Activated B cell treated with CpG ODN at 0.5 μM for 24 hours (primary cell): ENCODE measurements at regions of chr11 and their contacts with region 1.

Region 1: DNA sequence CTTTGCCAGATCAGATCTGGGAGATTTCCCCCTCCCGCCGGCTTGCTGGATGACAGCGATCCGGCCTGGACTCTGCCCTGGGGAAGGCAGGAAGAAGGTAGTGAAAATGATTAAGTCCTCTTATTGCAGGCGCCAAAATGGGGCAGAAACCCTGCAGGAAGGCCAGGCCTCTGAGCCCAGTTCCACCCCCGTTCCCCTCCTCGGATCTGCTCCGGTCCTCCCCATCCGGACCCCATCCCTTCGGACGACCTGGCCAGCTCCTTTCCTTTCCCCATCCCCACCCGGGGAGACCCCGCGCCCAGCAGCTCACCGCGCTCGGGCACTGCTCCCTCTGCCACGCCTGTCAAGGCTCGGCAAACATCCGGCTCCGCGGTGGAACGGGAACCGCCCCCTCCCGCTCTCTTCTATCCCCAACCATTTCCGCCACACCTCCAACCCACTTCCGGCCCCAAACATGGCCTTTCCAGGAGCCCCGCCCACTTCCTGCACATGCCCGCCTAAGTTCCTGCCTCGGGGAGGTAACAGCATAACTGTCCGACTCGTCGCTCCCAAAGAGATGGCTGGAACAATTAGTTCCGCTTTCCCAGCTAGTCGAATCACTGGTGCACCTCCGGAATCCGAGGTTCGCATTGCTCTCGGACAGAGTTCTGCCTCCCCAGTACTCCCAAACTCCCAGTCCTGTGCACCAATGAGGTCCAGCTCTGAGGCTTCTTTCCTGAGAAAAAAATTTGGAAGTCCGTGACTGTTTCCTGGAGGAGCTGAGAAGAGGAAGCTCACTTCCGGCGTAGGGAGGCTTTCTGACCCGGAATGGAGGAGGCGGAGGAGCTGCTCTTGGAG is at the starts of genes ARHGAP1 and ZNF408:
- DNase-seq: peak; percentile 96
- ATAC-seq: peak; percentile 87
- H3K4me3 Mint-ChIP-seq: peak within 1 kb of the TSS; percentile 99
- H3K27ac Mint-ChIP-seq: peak within 1 kb of the TSS; percentile 95
- H3K4me1 Mint-ChIP-seq: peaks cover 51% of the 10 kb centered on the region
- H3K27me3 Mint-ChIP-seq: no peaks in the 10 kb centered on the region
- CTCF ChIP-seq: no peak
- total RNA-seq, gene ARHGAP1: 47.6 and 58.0 TPM in 2 replicates
- total RNA-seq, gene ZNF408: 15.6 and 16.1 TPM in 2 replicates

Region 2: DNA sequence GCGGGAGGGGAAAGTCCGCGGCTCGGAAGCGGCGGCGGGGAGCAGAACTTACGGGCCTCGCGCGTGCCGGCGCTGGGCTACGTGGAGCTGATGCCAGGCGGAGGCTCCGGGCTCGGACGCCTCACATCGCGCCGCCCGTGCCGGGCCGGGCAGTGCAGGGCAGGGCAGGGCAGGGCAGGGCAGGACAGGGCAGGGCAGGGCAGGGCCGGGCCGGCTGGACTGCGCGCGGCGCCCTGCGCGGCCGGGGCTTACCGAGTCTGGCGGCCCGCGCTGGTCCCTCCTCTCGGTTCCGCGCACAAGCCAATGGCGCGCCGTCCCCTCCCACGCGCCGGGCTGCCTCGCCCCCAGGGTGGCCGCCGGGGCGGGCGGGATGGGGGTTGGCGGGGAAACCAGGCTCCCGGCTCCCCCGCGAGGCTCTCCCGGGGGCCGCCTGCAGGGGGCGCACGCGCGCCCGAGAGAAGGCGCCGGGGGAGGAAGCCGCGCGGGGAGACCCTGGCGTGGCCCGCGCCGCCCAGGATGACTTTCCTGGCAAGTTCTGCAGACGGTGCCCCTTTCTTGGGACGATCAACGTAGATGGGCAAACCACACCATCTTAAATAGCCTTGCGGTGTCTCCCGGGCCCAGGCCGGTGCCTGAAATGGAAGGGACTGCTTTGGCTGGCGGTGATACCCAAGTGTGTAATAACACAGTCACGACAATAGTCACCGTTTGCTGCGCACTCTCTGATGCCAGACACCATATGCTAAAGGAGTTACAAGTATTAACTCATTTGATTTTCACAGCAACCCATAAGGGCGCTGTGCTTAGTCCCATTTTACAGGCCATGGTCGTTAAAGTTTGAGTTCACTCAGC is 1749.6 kb before region 1 on chr11 and contains the start of gene TP53I11:
- CTCF ChIA-PET with region 1: no interaction called
- POLR2A ChIA-PET with region 1: no interaction called
- intact Hi-C with region 1: loop called (anchors 10 kb)
- DNase-seq: peak; percentile 74
- ATAC-seq: peak; percentile 76
- H3K4me3 Mint-ChIP-seq: peak within 1 kb of the TSS; percentile 91
- H3K27ac Mint-ChIP-seq: peak within 1 kb of the TSS; percentile 87
- H3K4me1 Mint-ChIP-seq: peaks cover 60% of the 10 kb centered on the region
- H3K27me3 Mint-ChIP-seq: no peaks in the 10 kb centered on the region
- CTCF ChIP-seq: peak; percentile 44
- total RNA-seq, gene TP53I11: 145 and 175 TPM in 2 replicates

Region 3: DNA sequence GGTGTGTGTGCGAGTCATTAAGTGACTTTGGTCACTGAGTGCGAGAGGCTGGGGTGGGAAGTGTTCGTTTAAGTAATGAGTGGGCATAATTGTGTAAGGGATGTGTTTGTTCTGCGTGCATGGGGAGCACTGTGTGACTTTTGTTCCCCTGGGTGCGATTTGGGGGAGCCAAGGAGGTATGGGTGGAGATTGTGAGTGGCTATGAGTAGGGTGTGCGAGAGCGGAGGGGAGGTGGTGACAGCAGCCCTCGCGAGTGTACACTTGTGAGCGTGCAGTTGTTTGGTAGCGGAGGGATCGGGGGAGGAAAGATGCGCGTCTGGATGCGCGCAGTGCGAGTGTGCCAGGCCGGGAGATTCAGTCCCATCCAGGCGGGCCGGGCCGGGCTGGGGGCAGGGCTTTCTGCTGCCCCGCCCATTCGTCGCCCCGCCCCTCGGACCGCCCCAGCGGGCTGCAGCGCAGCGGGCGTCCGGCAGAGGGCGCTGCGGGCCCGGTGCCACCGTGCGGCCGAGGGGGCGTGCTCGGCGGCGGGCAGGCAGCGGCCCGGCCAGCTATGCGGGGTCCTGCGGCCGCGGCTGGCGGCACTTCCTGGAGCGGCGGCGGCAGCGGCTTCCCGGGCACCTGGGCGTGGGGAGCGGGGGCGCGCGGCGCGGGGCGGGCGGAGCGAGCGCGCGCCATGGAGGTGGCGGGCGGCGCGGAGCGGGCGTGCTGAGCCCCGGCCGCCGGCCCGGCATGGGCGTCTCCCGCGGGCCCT is 353.4 kb before region 1 on chr11 and contains the start of gene DGKZ:
- CTCF ChIA-PET with region 1: no interaction called
- POLR2A ChIA-PET with region 1: no interaction called
- intact Hi-C with region 1: loop called (anchors 1 kb)
- DNase-seq: peak; percentile 99
- ATAC-seq: peak; percentile 93
- H3K4me3 Mint-ChIP-seq: peak within 1 kb of the TSS; percentile 90
- H3K27ac Mint-ChIP-seq: peak within 1 kb of the TSS; percentile 83
- H3K4me1 Mint-ChIP-seq: peaks cover 52% of the 10 kb centered on the region
- H3K27me3 Mint-ChIP-seq: no peaks in the 10 kb centered on the region
- CTCF ChIP-seq: no peak
- total RNA-seq, gene DGKZ: 48.1 and 53.6 TPM in 2 replicates

Region 4: DNA sequence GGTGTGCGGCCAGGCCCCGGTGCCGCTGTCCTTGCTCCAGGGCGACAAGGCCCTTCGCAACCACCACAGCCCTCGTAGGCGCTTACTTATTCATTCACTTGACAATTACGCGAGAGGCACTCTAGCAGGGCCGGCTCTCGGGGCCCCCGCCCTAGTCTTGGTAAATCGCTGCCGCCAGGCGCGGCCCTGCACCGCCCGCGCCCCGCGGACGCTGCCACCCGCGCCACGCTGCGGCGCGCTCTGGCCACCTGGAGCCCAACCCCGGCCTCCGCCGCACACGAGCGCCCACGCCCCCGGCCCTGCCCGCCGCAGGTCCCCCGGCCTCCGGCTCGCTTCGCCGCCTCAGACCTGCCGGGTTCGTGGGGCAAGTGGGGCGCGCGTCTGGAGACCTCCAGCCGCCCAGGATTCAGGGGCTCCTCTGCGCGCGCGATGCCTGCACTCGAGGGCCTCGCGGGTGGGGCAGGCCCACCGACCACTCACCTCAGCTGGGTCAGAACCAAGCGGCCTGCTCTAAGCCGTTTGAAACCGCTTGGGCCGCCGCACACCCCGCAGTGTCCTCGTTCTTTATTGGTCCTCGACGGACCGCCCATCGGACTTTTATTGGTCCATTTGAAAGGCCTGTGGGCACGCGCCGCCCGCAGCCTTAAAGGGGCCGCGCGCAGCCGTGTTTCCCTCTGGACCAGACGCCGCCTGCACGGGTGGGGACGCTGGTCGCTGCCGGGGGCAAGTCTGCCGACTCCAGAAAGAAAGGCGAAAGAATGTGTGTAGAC is 145.5 kb after region 1 on chr11 and contains the start of gene CKAP5:
- CTCF ChIA-PET with region 1: no interaction called
- POLR2A ChIA-PET with region 1: no interaction called
- intact Hi-C with region 1: loop called (anchors 5 kb)
- DNase-seq: peak; percentile 77
- ATAC-seq: peak; percentile 88
- H3K4me3 Mint-ChIP-seq: peak within 1 kb of the TSS; percentile 96
- H3K27ac Mint-ChIP-seq: peak within 1 kb of the TSS; percentile 88
- H3K4me1 Mint-ChIP-seq: peaks cover 33% of the 10 kb centered on the region
- H3K27me3 Mint-ChIP-seq: no peaks in the 10 kb centered on the region
- CTCF ChIP-seq: no peak
- total RNA-seq, gene CKAP5: 50.4 and 52.9 TPM in 2 replicates

Region 5: DNA sequence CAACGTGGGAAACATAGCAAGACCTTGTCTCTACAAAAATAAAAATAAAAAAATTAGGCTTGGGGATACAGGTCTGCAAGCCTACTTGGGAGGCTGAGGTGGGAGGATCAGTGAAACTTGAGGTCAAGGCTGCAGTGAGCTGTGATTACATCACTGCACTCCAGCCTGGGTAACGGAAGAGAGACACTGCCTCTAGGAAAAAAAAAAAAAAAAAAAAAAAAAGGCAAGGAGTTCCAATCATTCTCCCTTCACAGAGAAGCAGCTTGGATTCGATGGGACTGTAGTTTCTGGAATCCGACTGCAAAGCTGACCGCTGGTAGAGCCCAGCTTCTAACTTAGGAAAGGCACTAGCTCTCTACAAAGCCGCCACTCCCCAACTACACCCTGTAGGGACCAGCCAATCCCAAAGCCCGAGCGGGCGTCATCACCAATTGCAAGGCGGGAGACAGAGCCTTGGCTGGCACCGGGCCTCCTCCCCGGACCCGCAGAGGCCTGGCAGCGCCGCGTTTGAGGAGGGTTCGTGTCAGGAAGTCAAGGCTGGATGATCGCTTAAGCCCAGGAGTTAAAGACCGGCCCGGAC is 513.6 kb after region 1 on chr11:
- CTCF ChIA-PET with region 1: no interaction called
- POLR2A ChIA-PET with region 1: interaction called, 6 read pairs
- intact Hi-C with region 1: loop called (anchors 1 kb)
- DNase-seq: peak; percentile 72
- ATAC-seq: peak; percentile 73
- H3K4me3 Mint-ChIP-seq: peak overlapping the region; percentile 99
- H3K27ac Mint-ChIP-seq: peak overlapping the region; percentile 100
- H3K4me1 Mint-ChIP-seq: peaks cover 35% of the 10 kb centered on the region
- H3K27me3 Mint-ChIP-seq: no peaks in the 10 kb centered on the region
- CTCF ChIP-seq: no peak

Region 6: DNA sequence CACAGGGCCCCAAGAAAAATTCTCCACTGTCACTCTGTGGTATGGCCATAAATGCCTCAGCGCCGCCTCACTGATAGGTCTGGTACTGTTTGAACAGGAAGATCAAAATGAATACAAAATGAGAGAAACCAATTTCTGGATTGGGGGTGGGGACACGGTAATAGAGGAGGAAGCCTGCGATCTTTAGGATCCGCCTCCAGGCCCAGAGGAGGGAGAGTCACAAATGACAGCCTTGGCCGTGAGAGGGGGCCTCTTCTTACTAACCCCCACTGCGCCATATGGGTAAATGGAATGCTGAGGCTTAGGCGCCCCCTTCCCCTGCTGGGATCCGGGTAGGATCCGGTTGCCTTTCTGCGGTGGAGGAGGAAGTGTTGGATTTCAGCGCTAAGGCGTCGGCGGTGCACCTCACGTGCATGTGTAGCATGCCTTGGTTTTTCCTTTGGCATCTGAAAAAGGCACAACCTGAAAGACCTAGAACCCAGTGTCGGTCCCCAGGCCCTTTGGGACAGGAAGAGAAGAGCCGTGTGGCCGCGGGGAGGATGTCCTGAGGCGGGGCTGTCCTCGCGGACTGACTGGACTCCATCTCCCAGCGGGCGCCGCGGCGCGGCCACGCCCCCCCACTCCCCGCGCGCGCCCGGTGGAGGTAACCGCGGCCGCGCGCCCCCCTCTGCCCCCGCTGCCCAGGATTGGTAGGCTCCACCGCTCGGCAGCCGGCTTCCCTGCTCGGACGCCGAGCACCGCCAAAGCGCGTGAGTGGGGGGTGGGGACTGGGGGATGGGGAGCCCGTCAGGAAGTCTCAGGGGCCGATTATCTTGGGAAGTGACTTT is 568.8 kb after region 1 on chr11:
- CTCF ChIA-PET with region 1: no interaction called
- POLR2A ChIA-PET with region 1: no interaction called
- intact Hi-C with region 1: loop called (anchors 1 kb)
- DNase-seq: peak; percentile 88
- ATAC-seq: peak; percentile 62
- H3K4me3 Mint-ChIP-seq: peak overlapping the region; percentile 93
- H3K27ac Mint-ChIP-seq: peak overlapping the region; percentile 97
- H3K4me1 Mint-ChIP-seq: peaks cover 59% of the 10 kb centered on the region
- H3K27me3 Mint-ChIP-seq: no peaks in the 10 kb centered on the region
- CTCF ChIP-seq: no peak